ENCODE measurements at regions of chr5 and their contacts with region 1.

Region 1: GRCh38 chr5:143041972-143042770 is 272.0 kb downstream of the ARHGAP26 start:
- DNase-seq: no peak
- H3K4me3 ChIP-seq: no peak overlapping the region
- H3K27ac ChIP-seq: no peak overlapping the region
- H3K4me1 ChIP-seq: no peaks in the 10 kb centered on the region
- H3K27me3 ChIP-seq: no peaks in the 10 kb centered on the region
- CTCF ChIP-seq: no peak

Region 2: GRCh38 chr5:142906863-142907671 is 135.1 kb before region 1 on chr5:
- intact Hi-C with region 1: no loop called
- DNase-seq: no peak
- H3K4me3 ChIP-seq: no peak overlapping the region
- H3K27ac ChIP-seq: no peak overlapping the region
- H3K4me1 ChIP-seq: no peaks in the 10 kb centered on the region
- H3K27me3 ChIP-seq: no peaks in the 10 kb centered on the region
- CTCF ChIP-seq: no peak

Region 3: GRCh38 chr5:143134900-143135299 is 92.7 kb after region 1 on chr5:
- intact Hi-C with region 1: loop called (anchors 10 kb)
- DNase-seq: no peak
- H3K4me3 ChIP-seq: no peak overlapping the region
- H3K27ac ChIP-seq: no peak overlapping the region
- H3K4me1 ChIP-seq: no peaks in the 10 kb centered on the region
- H3K27me3 ChIP-seq: no peaks in the 10 kb centered on the region
- CTCF ChIP-seq: no peak

Measured in colonic mucosa (tissue), 4 donors.